ENCODE measurements at regions of chr10 and their contacts with region 1.

Region 1: GRCh38 chr10:61284222-61284890 is 168.8 kb downstream of the TMEM26 start:
- DNase-seq: peak; percentile 56
- H3K4me3 ChIP-seq: no peak overlapping the region
- H3K27ac ChIP-seq: no peak overlapping the region
- H3K4me1 ChIP-seq: peaks cover 9% of the 10 kb centered on the region
- CTCF ChIP-seq: peak; percentile 91

Region 2: DNA sequence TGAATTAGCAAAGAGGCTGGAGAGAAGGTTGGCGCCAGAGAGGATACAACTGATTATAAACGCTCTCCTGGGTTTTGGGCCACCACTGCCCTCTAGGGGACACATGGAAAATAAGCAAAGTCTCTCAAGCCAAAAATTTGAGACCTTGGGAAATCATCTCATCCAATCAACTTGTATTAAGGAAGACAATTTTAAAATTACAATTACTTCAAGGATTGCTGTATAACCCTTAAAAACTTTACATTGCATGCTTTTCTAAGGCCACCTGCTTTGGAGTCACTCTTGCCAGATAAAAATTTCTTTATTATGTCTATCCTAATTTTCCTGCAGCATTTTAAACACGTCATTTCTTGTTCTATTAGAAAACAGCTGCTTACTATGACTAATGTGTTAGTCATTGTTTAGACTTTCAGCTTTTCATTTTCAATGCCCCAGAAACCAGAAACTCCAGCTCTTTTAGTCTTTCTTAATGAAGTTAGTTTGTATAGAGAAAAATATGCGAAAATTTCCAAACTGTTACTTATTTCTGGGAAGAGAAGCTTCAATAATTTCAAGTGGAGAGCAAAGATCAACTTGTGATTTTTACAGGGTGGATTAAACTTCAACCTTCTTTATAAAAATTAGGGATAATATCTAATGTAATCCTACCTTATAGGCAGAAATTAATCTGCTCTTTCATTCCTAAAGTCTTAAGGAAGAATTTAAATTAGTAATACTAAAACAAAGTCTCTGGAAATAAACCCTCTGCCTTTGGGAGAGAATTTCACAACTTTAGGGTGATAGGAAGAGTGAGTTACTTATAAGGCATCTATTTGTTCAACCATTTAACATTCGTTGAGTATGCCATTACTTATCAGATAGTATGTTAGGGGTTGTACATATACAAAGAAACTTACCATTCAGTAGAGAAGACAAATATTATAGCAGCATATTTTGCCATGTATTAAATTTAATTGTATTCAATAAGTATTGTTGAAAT is 319.8 kb before region 1 on chr10:
- CTCF ChIA-PET with region 1: no interaction called
- POLR2A ChIA-PET with region 1: no interaction called
- intact Hi-C with region 1: loop called (anchors 5 kb)
- DNase-seq: peak; percentile 60
- H3K4me3 ChIP-seq: no peak overlapping the region
- H3K27ac ChIP-seq: no peak overlapping the region
- H3K4me1 ChIP-seq: peaks cover 10% of the 10 kb centered on the region
- CTCF ChIP-seq: peak; percentile 91

Region 3: DNA sequence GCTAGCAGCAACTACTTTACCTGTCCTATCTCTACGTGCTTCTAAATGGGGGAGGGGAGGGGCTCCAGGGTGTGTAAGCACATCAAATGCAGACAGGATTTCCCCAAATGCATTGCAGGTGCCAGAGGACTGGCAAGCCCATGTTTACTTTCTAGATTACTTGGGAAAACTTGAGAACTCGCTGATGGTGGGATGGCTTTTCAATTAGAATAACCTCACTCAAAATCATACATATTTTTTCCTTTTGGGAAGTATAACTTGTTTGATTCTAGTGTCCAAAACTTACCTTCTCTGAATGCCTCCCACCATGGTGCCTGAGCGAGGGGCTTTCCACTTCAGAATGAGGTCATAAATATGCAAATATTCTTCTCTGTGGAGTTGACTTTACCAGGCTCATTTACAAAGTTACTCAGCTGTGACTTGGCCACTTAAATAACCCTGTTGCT is 149.1 kb before region 1 on chr10:
- CTCF ChIA-PET with region 1: no interaction called
- POLR2A ChIA-PET with region 1: no interaction called
- intact Hi-C with region 1: loop called (anchors 5 kb)
- DNase-seq: peak; percentile 7
- H3K4me3 ChIP-seq: peak overlapping the region; percentile 30
- H3K27ac ChIP-seq: no peak overlapping the region
- H3K4me1 ChIP-seq: peaks cover 15% of the 10 kb centered on the region
- CTCF ChIP-seq: no peak

Region 4: DNA sequence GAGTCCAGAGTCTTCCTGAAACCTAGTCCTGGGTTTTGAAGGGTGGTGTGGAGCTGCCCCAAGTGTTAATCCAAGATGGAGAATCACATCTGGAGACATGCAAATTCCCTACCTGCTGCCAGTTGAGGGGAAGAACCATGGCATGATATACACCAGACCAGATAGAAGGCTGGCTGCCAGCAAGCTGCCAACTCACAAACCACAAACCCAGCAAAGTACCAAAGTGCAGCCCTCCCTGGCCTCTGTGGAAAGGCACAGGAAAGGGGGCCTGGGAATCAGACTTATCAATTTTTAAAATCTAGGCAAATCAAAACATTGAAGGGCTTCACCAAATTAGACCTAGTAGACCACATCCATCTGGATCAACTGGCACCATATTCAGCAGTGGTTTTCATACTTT is 11.8 kb after region 1 on chr10:
- CTCF ChIA-PET with region 1: no interaction called
- POLR2A ChIA-PET with region 1: no interaction called
- intact Hi-C with region 1: no loop called
- DNase-seq: no peak
- H3K4me3 ChIP-seq: no peak overlapping the region
- H3K27ac ChIP-seq: no peak overlapping the region
- H3K4me1 ChIP-seq: no peaks in the 10 kb centered on the region
- CTCF ChIP-seq: no peak

Measured in OCI-LY7 (cell line).